Activated naive CD4-positive, alpha-beta T cell treated with anti-CD3 and anti-CD28 coated beads for 36 hours (primary cell): ENCODE measurements at regions of chr10 and their contacts with region 1.

Region 1: GRCh38 chr10:8138471-8138870 is 84.0 kb downstream of the GATA3 start:
- DNase-seq: no peak
- H3K4me3 Mint-ChIP-seq: no peak overlapping the region
- H3K27ac Mint-ChIP-seq: no peak overlapping the region
- H3K4me1 Mint-ChIP-seq: peaks cover 35% of the 10 kb centered on the region
- H3K27me3 Mint-ChIP-seq: peaks cover 2% of the 10 kb centered on the region

Region 2: GRCh38 chr10:8059959-8060703 is 78.3 kb before region 1 on chr10:
- CTCF ChIA-PET with region 1: interaction called, 4 read pairs
- intact Hi-C with region 1: loop called (anchors 2 kb)
- DNase-seq: peak; percentile 75
- H3K4me3 Mint-ChIP-seq: peak overlapping the region; percentile 54
- H3K27ac Mint-ChIP-seq: peak overlapping the region; percentile 62
- H3K4me1 Mint-ChIP-seq: peaks cover 81% of the 10 kb centered on the region
- H3K27me3 Mint-ChIP-seq: no peaks in the 10 kb centered on the region

Region 3: DNA sequence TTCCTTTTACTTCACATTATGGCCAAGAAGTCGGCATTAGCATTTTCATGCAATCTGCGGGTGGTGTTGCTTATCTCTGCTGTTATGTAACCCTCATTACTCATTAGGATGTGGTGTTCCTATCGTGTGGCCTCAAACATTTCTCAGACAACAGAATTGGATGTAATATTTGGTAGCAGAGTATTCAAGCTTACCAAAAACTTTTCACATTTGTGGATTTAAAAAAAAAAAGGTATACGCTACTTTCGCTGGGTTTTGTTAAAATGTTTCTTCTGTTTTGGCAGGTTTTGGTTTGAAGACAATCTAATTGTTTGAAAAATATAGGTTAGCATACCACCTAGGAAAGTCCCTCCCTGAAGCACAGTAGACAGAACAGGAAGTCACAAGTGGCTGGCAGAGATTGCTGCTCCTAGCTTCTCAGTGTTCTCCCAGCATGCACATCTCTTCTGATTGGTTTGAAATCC is 44.8 kb after region 1 on chr10:
- CTCF ChIA-PET with region 1: interaction called, 3 read pairs
- intact Hi-C with region 1: loop called (anchors 2 kb)
- DNase-seq: peak; percentile 51
- H3K4me3 Mint-ChIP-seq: no peak overlapping the region
- H3K27ac Mint-ChIP-seq: peak overlapping the region; percentile 21
- H3K4me1 Mint-ChIP-seq: peaks cover 16% of the 10 kb centered on the region
- H3K27me3 Mint-ChIP-seq: no peaks in the 10 kb centered on the region

Region 4: GRCh38 chr10:8404391-8405120 is 266.1 kb after region 1 on chr10:
- CTCF ChIA-PET with region 1: interaction called, 4 read pairs
- intact Hi-C with region 1: loop called (anchors 5 kb)
- DNase-seq: peak; percentile 53
- H3K4me3 Mint-ChIP-seq: peak overlapping the region; percentile 4
- H3K27ac Mint-ChIP-seq: no peak overlapping the region
- H3K4me1 Mint-ChIP-seq: peaks cover 58% of the 10 kb centered on the region
- H3K27me3 Mint-ChIP-seq: no peaks in the 10 kb centered on the region

Region 5: DNA sequence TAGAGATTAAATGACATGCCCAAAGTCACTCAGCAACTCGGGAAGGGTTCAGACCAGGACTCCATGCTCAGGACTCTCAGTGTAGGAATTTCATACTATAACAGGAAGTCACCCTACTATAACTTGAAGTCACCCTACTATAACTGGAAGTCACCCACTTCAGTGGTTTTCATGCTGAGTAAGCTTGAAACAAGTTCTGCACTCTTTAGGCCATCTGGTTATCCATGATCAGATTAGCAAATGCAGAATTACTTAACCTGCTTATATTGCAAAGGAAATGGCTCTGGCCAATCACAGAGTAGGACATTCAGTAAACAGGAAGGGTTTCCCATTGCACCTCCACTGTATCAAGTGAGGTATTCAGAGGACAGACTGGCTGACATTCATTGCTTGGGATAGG is 1156.4 kb after region 1 on chr10:
- CTCF ChIA-PET with region 1: no interaction called
- intact Hi-C with region 1: loop called (anchors 5 kb)
- DNase-seq: peak; percentile 17
- H3K4me3 Mint-ChIP-seq: no peak overlapping the region
- H3K27ac Mint-ChIP-seq: no peak overlapping the region
- H3K4me1 Mint-ChIP-seq: peaks cover 17% of the 10 kb centered on the region
- H3K27me3 Mint-ChIP-seq: peaks cover 8% of the 10 kb centered on the region